AG04449 (cell line): ENCODE measurements at regions of chr10 and their contacts with region 1.

Region 1: GRCh38 chr10:102072673-102073527 is 7.8 kb downstream of the HPS6 start:
- DNase-seq: peak; percentile 28
- H3K4me3 ChIP-seq: no peak overlapping the region
- CTCF ChIP-seq: peak; percentile 91

Region 2: GRCh38 chr10:102040305-102041050 is 32.4 kb before region 1 on chr10:
- CTCF ChIA-PET with region 1: interaction called, 15 read pairs
- POLR2A ChIA-PET with region 1: no interaction called
- DNase-seq: no peak
- H3K4me3 ChIP-seq: no peak overlapping the region
- CTCF ChIP-seq: no peak

Region 3: DNA sequence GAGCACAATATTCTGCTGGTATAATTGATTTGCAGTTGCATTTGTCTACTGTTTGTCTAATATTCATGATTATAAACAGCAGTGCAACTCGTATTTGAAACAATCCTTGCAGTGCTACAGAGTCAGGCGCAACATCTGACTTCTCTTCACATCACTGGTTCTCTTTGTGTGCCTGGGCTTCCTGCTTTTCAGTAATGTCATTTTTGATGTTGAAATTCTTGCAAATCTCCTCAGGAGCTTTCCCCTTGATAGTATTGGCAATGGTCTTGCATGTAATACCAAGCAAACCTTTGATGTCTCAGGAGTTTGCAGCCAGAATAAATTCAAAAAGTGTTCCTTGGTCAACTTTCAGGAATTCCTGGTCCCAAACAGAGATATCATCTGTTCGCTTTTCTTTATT is 12.4 kb after region 1 on chr10:
- CTCF ChIA-PET with region 1: interaction called, 30 read pairs
- POLR2A ChIA-PET with region 1: interaction called, 3 read pairs
- DNase-seq: no peak
- H3K4me3 ChIP-seq: no peak overlapping the region
- CTCF ChIP-seq: no peak

Region 4: GRCh38 chr10:102101152-102101551 is 28.3 kb after region 1 on chr10:
- CTCF ChIA-PET with region 1: interaction called, 47 read pairs
- POLR2A ChIA-PET with region 1: no interaction called
- DNase-seq: no peak
- H3K4me3 ChIP-seq: no peak overlapping the region
- CTCF ChIP-seq: no peak

Region 5: DNA sequence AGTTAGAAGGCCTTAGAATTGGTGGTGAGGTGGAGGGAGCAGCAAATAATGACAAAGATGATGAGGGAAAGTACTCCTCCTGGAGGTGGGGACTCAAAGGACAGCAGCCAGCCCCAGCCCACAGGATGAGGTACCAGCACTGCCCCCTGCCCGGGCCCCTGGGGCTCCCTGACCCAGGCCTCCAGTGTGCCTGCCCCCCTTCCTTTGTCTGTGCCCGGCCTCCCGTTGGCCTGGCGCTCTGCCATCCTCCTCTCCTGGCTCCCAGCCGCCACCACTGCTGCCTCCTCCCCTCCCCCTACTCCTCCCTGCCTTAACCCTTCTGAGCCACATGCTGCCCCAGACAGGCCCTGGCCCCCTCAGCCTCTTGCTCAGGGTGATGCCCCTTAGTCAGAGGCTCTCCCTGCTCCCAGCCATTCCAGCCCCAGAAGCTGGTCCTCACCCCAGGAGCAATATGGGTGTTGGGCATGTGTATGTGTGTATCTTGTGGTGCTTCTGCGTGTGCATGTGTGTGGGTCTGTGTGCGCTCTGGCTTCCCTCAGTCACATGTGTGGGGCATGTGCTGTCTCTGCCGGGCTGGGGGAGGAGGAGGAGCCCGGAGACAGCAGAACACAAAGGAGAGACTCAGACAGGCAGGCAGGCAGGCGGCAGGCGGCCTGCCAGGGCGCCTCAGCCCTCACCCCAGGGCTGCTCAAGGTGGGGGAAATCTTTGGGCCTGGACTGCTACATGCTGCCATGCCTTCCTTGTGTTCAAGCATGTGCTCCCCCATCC is 44.7 kb after region 1 on chr10:
- CTCF ChIA-PET with region 1: interaction called, 13 read pairs
- POLR2A ChIA-PET with region 1: interaction called, 4 read pairs
- DNase-seq: no peak
- H3K4me3 ChIP-seq: peak overlapping the region; percentile 91
- CTCF ChIP-seq: peak; percentile 34